ENCODE measurements at regions of chr21 and their contacts with region 1.

Region 1: DNA sequence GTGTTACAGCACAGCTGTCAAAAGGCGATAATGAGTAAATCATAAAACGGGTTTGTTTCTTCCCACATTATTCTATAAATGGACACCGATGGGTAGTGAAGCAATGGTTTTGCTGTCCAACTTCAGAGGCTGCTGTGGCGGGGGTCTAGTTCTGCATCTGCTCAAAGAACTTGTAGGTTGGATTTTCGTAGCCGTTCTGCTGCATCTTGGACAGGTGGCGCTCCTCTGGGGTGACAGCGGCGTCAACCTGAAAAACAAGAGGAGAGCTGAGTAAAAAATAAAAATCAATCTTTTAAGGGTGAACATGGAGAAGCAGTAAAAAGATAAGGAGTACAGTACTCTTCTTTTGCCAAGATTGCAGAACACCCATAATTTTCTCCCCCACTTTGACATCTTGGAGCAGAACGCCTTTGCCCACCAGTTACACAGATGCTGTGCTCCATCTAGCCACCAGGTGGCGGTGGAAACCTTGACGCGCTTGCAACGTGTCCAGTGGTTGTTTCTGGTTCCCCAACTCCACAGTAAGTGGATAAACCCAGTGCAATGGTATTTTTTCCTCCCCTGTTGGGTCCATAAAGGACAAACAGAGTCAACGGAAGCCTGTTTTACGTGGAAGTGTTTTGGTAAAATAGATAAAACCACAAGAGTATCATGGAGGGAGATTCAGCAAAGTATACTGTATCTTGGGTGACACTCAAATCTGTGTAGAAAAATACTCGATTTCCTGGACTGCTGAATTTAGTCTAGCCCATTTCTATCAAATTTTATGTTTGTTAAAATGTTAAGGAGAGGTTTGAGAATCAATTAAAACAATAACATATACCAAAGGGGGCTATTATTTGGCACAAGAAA is 147.0 kb downstream of the GABPA start:
- DNase-seq: peak; percentile 72 to 86
- ATAC-seq: peak; percentile 89
- H3K4me3 ChIP-seq: no peak overlapping the region
- H3K27ac ChIP-seq: no peak overlapping the region
- H3K4me1 ChIP-seq: no peaks in the 10 kb centered on the region
- H3K27me3 ChIP-seq: no peaks in the 10 kb centered on the region

Region 2: DNA sequence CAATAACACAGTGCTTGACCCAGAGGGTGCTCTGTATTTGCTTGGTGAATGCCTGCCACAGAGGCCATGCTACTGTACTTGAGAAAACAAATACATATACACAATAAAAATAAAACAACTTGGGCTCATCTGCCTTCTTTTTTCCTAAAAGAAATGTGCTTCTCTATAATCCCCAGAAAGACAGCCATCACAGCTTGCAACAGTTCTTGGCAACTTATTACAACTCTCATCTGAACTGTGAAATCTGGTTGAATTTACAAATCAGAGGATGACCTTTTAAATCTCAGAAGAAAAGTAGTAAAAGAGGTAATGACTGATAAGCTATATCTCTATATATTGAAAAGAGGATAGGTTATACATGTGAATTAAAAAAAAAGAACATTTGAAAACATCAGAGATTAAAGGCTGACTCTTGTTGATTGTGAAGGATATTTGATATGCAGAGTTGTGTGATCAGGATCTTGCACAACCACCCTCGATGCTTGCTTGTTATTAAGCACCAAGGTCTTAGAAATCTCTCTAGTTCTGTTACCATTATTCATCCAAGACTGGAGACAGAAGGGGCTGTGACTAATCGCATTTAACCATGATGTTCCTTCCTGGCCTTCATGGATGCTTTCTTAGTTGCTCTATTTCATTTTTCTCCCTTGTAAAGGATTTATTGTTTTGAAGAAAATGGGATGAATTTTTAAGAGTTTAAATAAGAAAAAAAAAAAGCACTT is 75.4 kb after region 1 on chr21:
- intact Hi-C with region 1: no loop called
- DNase-seq: no peak
- ATAC-seq: no peak
- H3K4me3 ChIP-seq: no peak overlapping the region
- H3K27ac ChIP-seq: no peak overlapping the region
- H3K4me1 ChIP-seq: no peaks in the 10 kb centered on the region
- H3K27me3 ChIP-seq: no peaks in the 10 kb centered on the region

Region 3: GRCh38 chr21:26170471-26171257 is 288.9 kb after region 1 on chr21 and contains the start of gene APP:
- intact Hi-C with region 1: loop called (anchors 5 kb)
- DNase-seq: peak; percentile 91 to 95
- ATAC-seq: peak; percentile 94
- H3K4me3 ChIP-seq: peak within 1 kb of the TSS; percentile 93 to 95
- H3K27ac ChIP-seq: peak within 1 kb of the TSS; percentile 15 to 66
- H3K4me1 ChIP-seq: no peaks in the 10 kb centered on the region
- H3K27me3 ChIP-seq: no peaks in the 10 kb centered on the region
- total RNA-seq, gene APP: 507 to 581 TPM

Region 4: GRCh38 chr21:26715878-26716506 is 834.2 kb after region 1 on chr21:
- intact Hi-C with region 1: loop called (anchors 5 to 10 kb)
- DNase-seq: no peak
- ATAC-seq: peak; percentile 72
- H3K4me3 ChIP-seq: no peak overlapping the region
- H3K27ac ChIP-seq: no peak overlapping the region
- H3K4me1 ChIP-seq: no peaks in the 10 kb centered on the region
- H3K27me3 ChIP-seq: no peaks in the 10 kb centered on the region